A549 (cell line): ENCODE measurements at regions of chr4 and their contacts with region 1.

Region 1: GRCh38 chr4:101217353-101218031 is 129.8 kb downstream of the PPP3CA start:
- DNase-seq: peak in 1 of 2 experiments; percentile 55
- ATAC-seq: peak; percentile 74 to 96; a peak in 5 of 6 replicates
- H3K4me3 ChIP-seq: no peak overlapping the region
- H3K27ac ChIP-seq: peak overlapping the region; percentile 53 to 69
- H3K4me1 ChIP-seq: peaks cover 67% of the 10 kb centered on the region
- CTCF ChIP-seq: no peak
- EP300 ChIP-seq: no peak
- POLR2A ChIP-seq: no peak
- RAD21 ChIP-seq: no peak

Region 2: GRCh38 chr4:101347557-101348366 is 130.3 kb after region 1 on chr4:
- CTCF ChIA-PET with region 1: no interaction called
- POLR2A ChIA-PET with region 1: interaction called, 10 read pairs
- DNase-seq: peak; percentile 77 to 96
- ATAC-seq: peak; percentile 85 to 91
- H3K4me3 ChIP-seq: peak overlapping the region; percentile 79
- H3K27ac ChIP-seq: peak overlapping the region; percentile 91 to 99
- H3K4me1 ChIP-seq: peaks cover 40% of the 10 kb centered on the region
- CTCF ChIP-seq: no peak; the same call in 2 of the 3 replicates
- EP300 ChIP-seq: no peak
- POLR2A ChIP-seq: peak; percentile 45
- RAD21 ChIP-seq: peak in 1 of 2 experiments; percentile 14; a peak in 2 of 5 replicates